ENCODE measurements at regions of chr1 and their contacts with region 1.

Region 1: DNA sequence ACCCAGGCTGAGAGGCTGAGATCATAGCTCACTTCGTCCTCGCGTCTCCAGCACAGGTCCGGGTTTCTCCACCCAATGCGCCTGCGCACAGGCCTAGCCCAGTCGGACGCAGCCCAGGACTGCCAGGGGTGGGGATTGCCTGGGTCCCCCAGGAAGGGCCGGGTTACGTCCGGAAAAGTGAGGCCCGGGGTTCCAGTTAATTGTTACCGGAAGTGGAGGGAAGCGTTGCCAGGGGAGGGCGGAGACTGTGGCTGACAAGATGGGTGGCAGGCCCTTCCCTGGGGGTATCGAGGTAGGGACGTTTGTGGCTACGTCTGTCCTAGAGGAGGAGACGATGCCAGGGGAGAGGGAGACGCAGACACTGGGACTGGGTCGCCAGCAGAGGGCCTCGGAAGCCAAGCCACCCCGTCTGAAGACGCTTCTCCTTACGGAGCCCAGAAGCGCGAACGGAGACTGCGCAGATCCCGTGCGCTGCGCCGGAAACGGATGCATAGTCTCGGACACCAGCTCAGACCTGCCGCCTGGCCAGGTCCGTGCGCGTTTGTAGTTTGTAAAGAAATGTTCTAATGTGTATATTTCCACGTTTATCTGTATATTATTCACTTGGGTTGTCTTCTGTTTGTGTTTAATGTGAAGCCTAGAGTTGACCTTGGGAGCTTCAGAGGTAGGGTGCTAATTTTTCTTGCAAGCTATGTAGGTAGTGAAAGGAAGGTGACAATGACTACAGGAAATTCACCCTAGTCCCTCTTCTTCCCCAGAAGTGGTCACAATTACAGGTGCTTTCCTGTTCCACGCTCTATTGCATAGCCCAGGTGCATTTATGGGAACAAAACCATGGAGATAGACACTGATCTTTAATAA is 7.3 kb downstream of the RSRP1 start:
- DNase-seq: peak; percentile 91
- ATAC-seq: peak; percentile 86
- H3K4me3 ChIP-seq: peak overlapping the region; percentile 50 to 68 (median 64)
- H3K4me3 Mint-ChIP-seq: peak overlapping the region; percentile 95
- H3K27ac ChIP-seq: peak overlapping the region; percentile 75 to 95
- H3K27ac Mint-ChIP-seq: peak overlapping the region; percentile 98
- H3K4me1 ChIP-seq: peaks cover 37 to 46% of the 10 kb centered on the region in 2 donors
- H3K4me1 Mint-ChIP-seq: peaks cover 60% of the 10 kb centered on the region
- H3K27me3 ChIP-seq: no peaks in the 10 kb centered on the region
- H3K27me3 Mint-ChIP-seq: no peaks in the 10 kb centered on the region
- CTCF ChIP-seq: peak; percentile 71

Region 2: GRCh38 chr1:24765308-24765988 is 474.5 kb before region 1 on chr1:
- CTCF ChIA-PET with region 1: no interaction called
- POLR2A ChIA-PET with region 1: no interaction called
- intact Hi-C with region 1: no loop called
- DNase-seq: no peak
- ATAC-seq: no peak
- H3K4me3 ChIP-seq: no peak overlapping the region
- H3K4me3 Mint-ChIP-seq: no peak overlapping the region
- H3K27ac ChIP-seq: no peak overlapping the region
- H3K27ac Mint-ChIP-seq: no peak overlapping the region
- H3K4me1 ChIP-seq: peaks cover 37 to 39% of the 10 kb centered on the region in 2 donors
- H3K4me1 Mint-ChIP-seq: peaks cover 32% of the 10 kb centered on the region
- H3K27me3 ChIP-seq: no peaks in the 10 kb centered on the region
- H3K27me3 Mint-ChIP-seq: no peaks in the 10 kb centered on the region
- CTCF ChIP-seq: no peak

Region 3: DNA sequence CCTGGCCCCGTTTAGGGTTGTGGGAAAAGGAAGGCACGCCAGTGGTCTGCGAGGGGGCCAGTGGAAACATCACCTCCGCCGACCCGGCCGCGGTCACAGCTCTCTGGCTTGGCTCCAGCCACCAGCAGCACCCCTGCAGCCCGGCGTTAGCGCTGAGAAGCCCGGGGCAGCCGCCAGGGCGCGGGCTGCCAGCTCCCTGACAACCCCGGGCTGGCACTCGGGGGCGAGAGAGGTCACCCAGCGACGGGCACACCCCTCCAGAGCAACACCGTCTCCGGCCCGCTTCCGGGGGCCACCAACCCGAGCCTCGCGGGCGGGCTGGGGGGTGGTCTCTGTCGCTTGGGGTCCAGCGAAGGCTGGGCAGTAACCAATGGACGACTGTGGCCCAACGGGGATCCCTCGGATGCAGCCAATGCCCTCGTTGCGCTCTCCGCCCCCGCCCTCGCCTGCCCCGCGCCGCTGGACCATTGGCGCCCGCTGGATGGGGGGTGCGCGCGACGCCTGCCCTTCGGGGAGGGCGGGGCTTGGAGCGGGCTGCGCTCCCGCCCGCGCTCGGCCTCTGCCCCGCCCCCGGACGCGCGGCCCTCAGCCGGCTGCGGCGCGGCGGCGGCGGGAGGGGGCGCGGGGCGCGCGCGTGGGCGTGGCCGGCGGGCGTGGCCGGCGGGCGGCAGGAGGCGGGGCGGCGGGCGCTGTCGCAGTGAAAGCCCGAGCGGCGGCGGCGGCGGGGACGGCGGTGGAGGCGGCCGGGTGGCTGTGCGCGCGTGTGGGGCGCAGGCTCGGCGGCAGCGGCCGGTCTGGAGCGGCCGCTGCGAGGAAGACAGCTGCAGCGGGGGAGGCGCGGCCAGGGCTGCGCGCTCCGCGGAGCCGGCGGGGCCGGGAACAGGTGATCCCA is 376.4 kb after region 1 on chr1 and contains the start of gene MAN1C1:
- CTCF ChIA-PET with region 1: no interaction called
- POLR2A ChIA-PET with region 1: no interaction called
- intact Hi-C with region 1: loop called (anchors 10 kb)
- DNase-seq: peak; percentile 88
- ATAC-seq: peak; percentile 92
- H3K4me3 ChIP-seq: peak within 1 kb of the TSS in 4 of 5 experiments; percentile 69 to 78 (median 74)
- H3K4me3 Mint-ChIP-seq: peak within 1 kb of the TSS; percentile 87
- H3K27ac ChIP-seq: no peak within 1 kb of the TSS
- H3K27ac Mint-ChIP-seq: peak within 1 kb of the TSS; percentile 69
- H3K4me1 ChIP-seq: peaks cover 8 to 22% of the 10 kb centered on the region in 2 donors
- H3K4me1 Mint-ChIP-seq: peaks cover 23% of the 10 kb centered on the region
- H3K27me3 ChIP-seq: peaks cover 0 to 45% (median 24%) of the 10 kb centered on the region in 4 experiments
- H3K27me3 Mint-ChIP-seq: peaks cover 43% of the 10 kb centered on the region
- CTCF ChIP-seq: peak; percentile 38
- total RNA-seq, gene MAN1C1: 0.70 and 0.89 TPM in 2 replicates

Region 4: GRCh38 chr1:25819576-25820246 is 579.8 kb after region 1 on chr1 and contains the start of gene MTFR1L:
- CTCF ChIA-PET with region 1: no interaction called
- POLR2A ChIA-PET with region 1: no interaction called
- intact Hi-C with region 1: loop called (anchors 10 kb)
- DNase-seq: peak; percentile 94
- ATAC-seq: peak; percentile 93
- H3K4me3 ChIP-seq: peak within 1 kb of the TSS; percentile 66 to 99 (median 84)
- H3K4me3 Mint-ChIP-seq: peak within 1 kb of the TSS; percentile 95
- H3K27ac ChIP-seq: peak within 1 kb of the TSS; percentile 76 to 84
- H3K27ac Mint-ChIP-seq: peak within 1 kb of the TSS; percentile 94
- H3K4me1 ChIP-seq: peaks cover 18 to 24% of the 10 kb centered on the region in 2 donors
- H3K4me1 Mint-ChIP-seq: peaks cover 29% of the 10 kb centered on the region
- H3K27me3 ChIP-seq: no peaks in the 10 kb centered on the region
- H3K27me3 Mint-ChIP-seq: no peaks in the 10 kb centered on the region
- CTCF ChIP-seq: no peak
- total RNA-seq, gene MTFR1L: 40.9 and 41.5 TPM in 2 replicates